ENCODE measurements at regions of chr4 and their contacts with region 1.

Region 1: DNA sequence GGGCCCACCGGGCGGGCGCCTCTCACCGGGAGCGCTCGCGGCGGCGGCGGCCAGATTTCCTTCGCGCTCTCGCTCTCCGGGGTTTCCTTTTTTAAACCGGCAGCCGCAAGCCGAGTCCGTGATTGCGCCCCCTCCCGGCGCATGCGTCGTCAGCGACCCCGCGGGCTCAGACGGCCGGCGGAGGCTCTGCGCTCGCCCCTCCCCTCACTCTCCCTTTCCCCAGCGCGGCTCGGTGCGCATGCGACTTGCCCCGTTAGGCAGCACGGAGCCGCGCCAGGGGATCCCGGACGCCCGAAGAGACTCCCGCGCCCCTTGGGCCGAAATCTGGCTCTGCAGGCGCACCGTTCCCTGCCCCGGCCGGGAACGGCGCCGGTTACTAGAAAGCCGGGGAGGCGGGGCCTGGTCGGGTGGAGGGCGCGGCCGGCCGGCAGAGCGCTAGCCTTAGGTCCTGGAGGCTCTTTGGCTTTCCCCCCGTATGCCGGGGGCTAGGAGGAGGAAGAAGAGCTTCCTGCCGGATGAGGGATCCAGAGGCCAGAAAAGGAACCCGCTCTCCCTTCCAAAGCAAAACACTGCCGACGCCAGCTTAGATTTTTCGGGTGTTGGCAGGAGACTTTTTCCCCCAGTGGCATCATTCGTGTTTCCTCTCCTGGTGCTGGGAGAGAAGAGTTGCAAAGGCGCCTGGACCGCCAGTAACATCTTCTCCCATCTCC is at the start of gene CLOCK:
- DNase-seq: peak; percentile 50 to 80
- H3K4me3 ChIP-seq: peak within 1 kb of the TSS; percentile 75
- H3K27ac ChIP-seq: peak within 1 kb of the TSS; percentile 80
- H3K4me1 ChIP-seq: peaks cover 41% of the 10 kb centered on the region
- H3K27me3 ChIP-seq: no peaks in the 10 kb centered on the region
- CTCF ChIP-seq: peak; percentile 58
- total RNA-seq, gene CLOCK: 13.3 and 19.4 TPM in 2 replicates

Region 2: DNA sequence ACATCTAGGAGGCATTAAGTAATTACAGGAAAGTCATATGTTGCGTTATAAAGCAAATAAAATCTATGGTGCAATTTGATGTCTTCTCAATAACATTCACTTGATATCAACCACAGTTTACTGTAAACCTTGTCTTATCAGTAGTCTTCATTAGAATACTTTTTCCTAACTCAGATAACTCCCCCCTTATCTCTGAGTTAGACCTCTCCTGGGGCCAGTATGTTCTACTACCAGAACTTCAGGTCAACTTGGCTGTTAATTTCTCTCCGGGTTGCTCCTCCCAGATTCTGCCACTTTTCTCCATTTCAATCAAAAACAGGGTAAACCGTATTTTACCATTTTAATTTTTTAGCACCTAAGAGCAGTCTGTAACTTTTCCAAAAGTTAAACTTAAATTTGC is 471.5 kb before region 1 on chr4:
- CTCF ChIA-PET with region 1: no interaction called
- POLR2A ChIA-PET with region 1: interaction called, 10 read pairs
- intact Hi-C with region 1: no loop called
- DNase-seq: no peak
- H3K4me3 ChIP-seq: no peak overlapping the region
- H3K27ac ChIP-seq: no peak overlapping the region
- H3K4me1 ChIP-seq: no peaks in the 10 kb centered on the region
- H3K27me3 ChIP-seq: no peaks in the 10 kb centered on the region
- CTCF ChIP-seq: no peak

Region 3: DNA sequence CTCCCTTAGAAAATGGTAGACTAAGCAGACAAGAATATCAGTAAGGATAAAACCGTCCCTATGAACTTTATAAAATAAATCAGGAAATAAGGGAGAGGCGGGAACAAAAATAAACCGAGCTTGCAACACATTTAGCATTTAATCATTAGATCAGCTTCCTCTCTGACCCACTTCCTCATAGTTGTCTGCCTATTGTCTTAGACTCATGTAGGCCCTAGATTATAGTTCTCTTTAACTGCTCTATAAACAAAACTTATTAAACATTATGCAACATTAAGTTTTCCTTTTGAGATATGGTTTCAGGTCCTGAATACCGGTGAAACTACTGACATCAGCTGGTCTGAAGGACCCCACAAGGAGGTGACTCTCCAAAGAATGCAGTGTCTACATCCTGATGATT is 216.7 kb before region 1 on chr4:
- CTCF ChIA-PET with region 1: no interaction called
- POLR2A ChIA-PET with region 1: no interaction called
- intact Hi-C with region 1: no loop called
- DNase-seq: peak in 1 of 2 experiments; percentile 76
- H3K4me3 ChIP-seq: no peak overlapping the region
- H3K27ac ChIP-seq: peak overlapping the region; percentile 71
- H3K4me1 ChIP-seq: peaks cover 33% of the 10 kb centered on the region
- H3K27me3 ChIP-seq: no peaks in the 10 kb centered on the region
- CTCF ChIP-seq: no peak

Region 4: DNA sequence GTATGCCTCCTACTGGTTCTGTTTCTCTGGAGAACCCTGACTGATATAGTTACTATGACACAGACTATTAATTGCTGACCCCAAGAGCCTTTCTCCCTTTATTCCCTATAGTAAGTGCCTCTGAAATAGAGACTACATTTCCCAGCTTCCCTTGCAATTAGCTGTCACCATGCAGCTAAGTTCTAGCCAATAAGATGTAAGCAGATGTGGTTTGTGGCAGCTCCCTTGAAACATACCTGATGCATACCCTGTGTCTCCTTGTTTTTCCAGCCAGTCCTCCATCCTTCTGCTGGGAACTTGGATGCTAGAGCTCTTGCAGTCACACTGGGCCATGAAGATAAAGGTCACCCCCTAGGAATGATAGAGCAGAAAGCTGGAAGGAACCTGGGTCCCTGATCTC is 160.8 kb before region 1 on chr4:
- CTCF ChIA-PET with region 1: no interaction called
- POLR2A ChIA-PET with region 1: interaction called, 15 read pairs
- intact Hi-C with region 1: no loop called
- DNase-seq: no peak
- H3K4me3 ChIP-seq: no peak overlapping the region
- H3K27ac ChIP-seq: no peak overlapping the region
- H3K4me1 ChIP-seq: peaks cover 12% of the 10 kb centered on the region
- H3K27me3 ChIP-seq: no peaks in the 10 kb centered on the region
- CTCF ChIP-seq: no peak

Region 5: DNA sequence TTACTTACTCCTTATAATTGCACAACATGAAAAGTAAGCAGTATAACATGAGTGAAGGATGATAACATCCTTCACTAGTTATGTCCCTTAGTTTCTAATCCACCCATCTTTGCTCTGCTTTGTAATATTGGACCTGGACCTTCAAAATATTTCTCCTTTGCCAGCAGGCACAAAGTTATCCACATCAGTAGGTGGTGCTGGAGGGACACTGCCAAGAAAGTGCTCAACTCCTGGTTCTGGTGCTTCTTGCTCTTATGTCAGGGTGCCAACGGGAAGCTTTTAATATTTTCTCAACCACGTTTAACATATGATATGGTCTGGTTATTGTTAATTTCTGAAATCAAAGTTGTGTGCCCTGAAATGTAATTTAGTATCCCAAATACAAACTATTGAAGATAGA is 102.1 kb before region 1 on chr4:
- CTCF ChIA-PET with region 1: no interaction called
- POLR2A ChIA-PET with region 1: no interaction called
- intact Hi-C with region 1: loop called (anchors 10 kb)
- DNase-seq: no peak
- H3K4me3 ChIP-seq: no peak overlapping the region
- H3K27ac ChIP-seq: no peak overlapping the region
- H3K4me1 ChIP-seq: no peaks in the 10 kb centered on the region
- H3K27me3 ChIP-seq: no peaks in the 10 kb centered on the region
- CTCF ChIP-seq: no peak; the same call in 1 of the 2 replicates

Region 6: DNA sequence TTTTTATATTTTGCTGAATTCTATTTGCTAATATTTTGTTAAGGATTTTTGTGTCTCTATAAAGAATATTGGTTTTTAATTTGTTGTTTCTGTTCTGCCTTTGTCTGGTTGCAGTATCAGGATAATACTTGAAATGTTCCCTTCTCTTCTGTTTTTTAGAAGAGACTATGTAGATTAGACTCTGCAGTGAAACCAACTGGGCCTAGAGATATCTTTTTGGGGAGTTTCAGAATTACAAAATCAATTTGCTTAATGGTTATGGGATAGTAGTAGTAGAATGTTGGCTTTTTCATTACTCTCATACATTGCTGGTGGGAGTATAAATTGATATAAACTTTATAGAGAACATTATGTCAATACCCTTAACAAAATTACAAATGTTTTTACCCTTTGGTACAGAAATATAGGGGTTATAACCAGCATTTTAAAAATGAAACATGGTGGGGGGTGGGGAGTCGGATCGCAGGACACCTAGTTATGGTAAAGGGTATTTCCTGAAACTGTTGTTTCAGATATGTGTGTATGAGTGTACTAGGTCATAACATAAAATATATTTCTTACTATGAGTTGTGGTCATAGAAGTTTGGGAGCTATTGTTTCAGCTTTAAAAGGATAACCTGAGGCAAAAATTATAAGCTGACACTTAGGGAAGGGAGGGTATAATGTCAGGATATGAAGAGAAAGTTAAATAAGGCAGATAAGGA is 29.2 kb before region 1 on chr4:
- CTCF ChIA-PET with region 1: no interaction called
- POLR2A ChIA-PET with region 1: no interaction called
- intact Hi-C with region 1: no loop called
- DNase-seq: no peak
- H3K4me3 ChIP-seq: no peak overlapping the region
- H3K27ac ChIP-seq: no peak overlapping the region
- H3K4me1 ChIP-seq: no peaks in the 10 kb centered on the region
- H3K27me3 ChIP-seq: no peaks in the 10 kb centered on the region
- CTCF ChIP-seq: no peak

Region 7: DNA sequence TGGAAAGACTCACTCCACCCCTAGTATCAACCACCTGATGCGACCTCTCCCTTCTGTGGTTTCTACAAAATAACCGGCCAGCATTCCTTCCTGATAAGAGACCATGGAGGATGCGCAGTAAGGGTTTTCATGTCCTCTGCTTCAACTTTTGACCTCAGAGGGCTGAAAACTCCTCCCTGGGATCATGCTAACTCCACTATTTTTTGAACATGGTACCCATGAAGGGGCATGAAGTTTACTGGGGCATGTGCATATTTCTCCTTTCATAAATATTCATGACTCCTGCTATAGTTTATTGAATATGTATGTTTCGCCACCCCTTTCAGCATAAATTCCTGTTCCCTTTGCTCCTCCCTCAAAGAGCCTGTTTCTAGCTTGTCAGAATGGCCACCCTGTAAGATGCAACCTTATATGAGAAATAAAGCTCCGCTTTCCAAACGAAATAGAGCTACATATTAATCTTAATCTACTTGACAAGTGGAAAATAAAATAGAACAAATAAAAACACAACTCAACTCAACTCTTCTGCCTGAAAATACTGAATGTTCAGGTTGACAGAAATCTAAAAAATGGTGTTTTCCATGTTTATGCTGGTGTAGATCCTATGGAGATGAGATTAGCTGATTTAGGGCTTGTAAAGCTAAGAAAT is 183.1 kb after region 1 on chr4:
- CTCF ChIA-PET with region 1: interaction called, 4 read pairs
- POLR2A ChIA-PET with region 1: interaction called, 6 read pairs
- intact Hi-C with region 1: loop called (anchors 2 kb)
- DNase-seq: peak; percentile 53 to 80
- H3K4me3 ChIP-seq: no peak overlapping the region
- H3K27ac ChIP-seq: peak overlapping the region; percentile 93
- H3K4me1 ChIP-seq: peaks cover 43% of the 10 kb centered on the region
- H3K27me3 ChIP-seq: no peaks in the 10 kb centered on the region
- CTCF ChIP-seq: no peak